ENCODE measurements at regions of chr6 and their contacts with region 1.

Region 1: GRCh38 chr6:142045380-142046278 is 87.1 kb upstream of the GJE1 start:
- DNase-seq: peak; percentile 40
- H3K4me3 Mint-ChIP-seq: no peak overlapping the region
- H3K27ac Mint-ChIP-seq: no peak overlapping the region
- H3K4me1 Mint-ChIP-seq: no peaks in the 10 kb centered on the region
- H3K27me3 Mint-ChIP-seq: peaks cover 42% of the 10 kb centered on the region
- CTCF ChIP-seq: peak; percentile 35

Region 2: DNA sequence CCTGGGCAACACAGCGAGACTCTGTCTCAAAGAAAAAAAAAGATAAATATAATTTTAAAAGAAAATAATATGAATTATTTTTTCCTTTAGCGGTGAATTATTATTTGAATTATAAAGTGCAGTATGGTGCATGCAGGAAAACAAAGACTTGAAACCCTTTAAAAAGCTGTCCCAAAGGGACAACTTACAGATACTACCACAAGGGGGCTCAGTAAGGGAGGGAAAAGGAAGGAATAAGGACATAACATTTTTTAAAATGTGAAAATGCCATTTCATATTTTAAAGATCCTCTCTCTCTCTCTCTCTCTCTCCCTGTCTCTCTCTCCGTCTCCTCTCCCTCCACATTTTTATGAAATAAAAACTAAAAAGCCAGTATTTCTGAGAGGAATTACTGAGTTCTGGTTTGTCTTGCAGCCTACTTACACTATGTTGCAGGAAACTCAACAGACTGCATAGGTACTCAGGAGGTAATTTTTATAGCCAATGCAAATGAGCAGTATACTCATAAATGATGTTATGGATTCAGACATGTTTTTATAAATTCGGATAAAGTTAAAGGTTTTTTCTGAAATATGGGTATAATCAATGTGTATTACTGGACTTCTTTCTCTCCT is 367.9 kb before region 1 on chr6:
- CTCF ChIA-PET with region 1: no interaction called
- POLR2A ChIA-PET with region 1: no interaction called
- intact Hi-C with region 1: loop called (anchors 5 kb)
- DNase-seq: peak; percentile 68
- H3K4me3 Mint-ChIP-seq: no peak overlapping the region
- H3K27ac Mint-ChIP-seq: no peak overlapping the region
- H3K4me1 Mint-ChIP-seq: peaks cover 6% of the 10 kb centered on the region
- H3K27me3 Mint-ChIP-seq: peaks cover 27% of the 10 kb centered on the region
- CTCF ChIP-seq: peak; percentile 48

Region 3: GRCh38 chr6:141780296-141780695 is 265.3 kb before region 1 on chr6:
- CTCF ChIA-PET with region 1: no interaction called
- POLR2A ChIA-PET with region 1: no interaction called
- intact Hi-C with region 1: no loop called
- DNase-seq: no peak
- H3K4me3 Mint-ChIP-seq: no peak overlapping the region
- H3K27ac Mint-ChIP-seq: no peak overlapping the region
- H3K4me1 Mint-ChIP-seq: no peaks in the 10 kb centered on the region
- H3K27me3 Mint-ChIP-seq: peaks cover 38% of the 10 kb centered on the region
- CTCF ChIP-seq: no peak

Region 4: DNA sequence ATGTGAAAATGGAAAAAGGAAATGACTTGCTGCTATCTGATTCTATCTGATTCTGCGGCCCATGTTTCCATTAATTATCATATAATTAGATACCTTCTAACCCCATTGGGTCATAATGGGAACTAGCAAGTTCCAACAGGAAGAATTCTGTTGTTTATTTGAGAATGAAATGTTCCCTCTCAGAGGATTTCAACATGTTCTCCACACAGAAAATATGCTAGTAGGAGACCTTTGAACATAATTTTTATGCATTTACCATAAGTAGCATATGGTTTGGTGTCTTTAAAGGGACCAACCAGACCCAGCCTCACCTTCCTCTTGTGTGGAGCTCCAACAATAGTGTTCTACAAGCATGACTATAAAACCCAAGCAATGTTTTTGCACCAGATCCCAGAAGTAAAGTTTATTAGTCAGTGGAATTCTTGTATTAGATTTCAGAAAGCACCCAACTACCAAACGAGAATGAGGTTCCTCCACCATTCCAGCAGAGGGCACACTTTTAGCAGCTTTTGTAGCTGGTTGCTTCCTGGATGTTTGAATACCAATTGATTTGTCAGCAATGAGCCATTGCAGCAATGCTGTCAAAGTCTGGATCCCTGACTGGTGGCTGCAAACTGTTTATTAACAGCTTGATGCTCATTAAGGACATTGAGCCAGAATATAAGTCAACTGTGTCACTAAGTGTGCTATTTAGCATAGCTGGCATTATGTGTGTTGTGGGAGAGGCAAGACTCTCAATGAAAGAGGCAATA is 56.5 kb before region 1 on chr6:
- CTCF ChIA-PET with region 1: interaction called, 17 read pairs
- POLR2A ChIA-PET with region 1: no interaction called
- intact Hi-C with region 1: loop called (anchors 1 kb)
- DNase-seq: peak; percentile 84
- H3K4me3 Mint-ChIP-seq: no peak overlapping the region
- H3K27ac Mint-ChIP-seq: no peak overlapping the region
- H3K4me1 Mint-ChIP-seq: no peaks in the 10 kb centered on the region
- H3K27me3 Mint-ChIP-seq: peaks cover 11% of the 10 kb centered on the region
- CTCF ChIP-seq: peak; percentile 75